GM10248 (cell line): ENCODE measurements at regions of chr3 and their contacts with region 1.

Region 1: DNA sequence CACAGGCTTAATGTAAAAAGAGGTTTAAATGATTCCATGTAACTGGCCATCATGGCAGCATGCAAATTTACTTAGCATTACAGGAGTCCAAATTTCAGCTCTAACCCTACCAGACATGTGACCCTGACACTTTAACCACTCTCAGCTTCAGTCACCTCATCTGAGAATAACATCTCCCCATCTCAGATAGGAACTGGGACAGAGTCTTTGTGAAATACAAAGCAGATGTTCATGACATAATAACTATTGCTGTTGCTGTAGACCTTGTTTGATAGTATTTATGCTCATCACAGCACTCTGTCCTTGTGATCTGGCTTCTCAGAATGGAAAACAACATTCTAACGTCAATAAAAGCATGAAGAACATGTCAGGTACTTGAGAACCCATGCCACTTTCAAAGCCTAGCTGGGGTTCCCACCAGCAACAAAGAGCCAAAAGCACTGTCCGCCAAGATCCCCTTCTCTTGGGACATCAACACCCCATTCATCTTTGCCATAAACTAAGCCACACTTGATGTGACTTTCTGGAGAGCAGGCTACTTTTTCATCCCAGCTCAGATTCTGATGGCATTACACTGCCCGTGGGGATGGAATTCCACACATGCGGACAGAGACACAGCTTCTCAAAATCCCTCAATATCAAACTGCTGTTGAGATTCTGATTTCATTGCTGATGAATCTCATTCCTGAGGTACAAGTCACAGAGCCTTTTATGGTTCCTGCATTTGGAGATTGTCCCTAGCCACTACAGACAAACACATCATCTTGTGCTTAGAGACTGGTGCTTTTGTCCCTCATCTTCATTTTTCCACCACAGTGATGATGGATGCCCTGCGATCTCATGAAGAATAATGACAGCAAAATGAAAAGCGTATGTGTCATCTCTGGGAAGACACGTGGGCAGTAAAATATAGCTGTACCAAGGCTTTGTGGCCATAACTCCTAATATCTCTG is 202.7 kb downstream of the TNIK start:
- DNase-seq: peak; percentile 33
- CTCF ChIP-seq: no peak

Region 2: DNA sequence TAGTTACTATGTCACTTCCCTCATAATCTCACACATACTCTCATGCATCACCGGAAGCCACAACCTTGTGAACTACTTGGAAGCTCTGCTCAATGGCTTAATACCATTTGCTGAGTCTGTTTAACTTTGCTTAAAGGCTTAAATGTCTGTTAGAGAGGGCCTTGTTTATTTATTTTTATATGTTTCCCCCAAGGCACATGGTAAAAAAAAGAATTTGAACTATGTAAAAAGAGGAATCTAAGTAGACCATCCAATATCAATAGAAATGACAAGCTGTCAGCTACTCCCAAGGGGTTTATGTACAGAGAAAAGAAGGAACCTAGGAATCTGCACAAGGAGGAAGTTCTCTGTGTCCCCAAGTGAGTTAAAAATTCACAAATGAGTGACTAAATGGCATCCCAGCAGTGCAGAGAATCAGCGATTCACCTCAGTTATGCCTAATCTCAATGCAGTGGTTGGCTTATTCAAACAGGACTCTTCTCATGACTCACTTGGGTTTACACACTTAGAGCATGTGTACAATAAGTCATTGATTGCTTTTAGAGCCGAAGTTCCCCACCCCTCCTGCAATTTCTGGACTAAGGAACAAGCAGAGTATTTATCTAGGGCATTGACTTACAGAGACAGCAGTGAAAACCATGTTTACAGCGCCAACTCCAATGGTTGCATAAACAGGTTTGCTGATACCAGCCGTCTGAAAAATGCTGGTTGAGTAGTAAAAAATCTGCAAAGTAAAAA is 255.4 kb before region 1 on chr3:
- CTCF ChIA-PET with region 1: no interaction called
- POLR2A ChIA-PET with region 1: no interaction called
- DNase-seq: no peak
- CTCF ChIP-seq: no peak

Region 3: GRCh38 chr3:171269542-171269941 is 12.0 kb after region 1 on chr3:
- CTCF ChIA-PET with region 1: interaction called, 34 read pairs
- POLR2A ChIA-PET with region 1: no interaction called
- DNase-seq: no peak
- CTCF ChIP-seq: no peak

Region 4: GRCh38 chr3:171284308-171285075 is 27.0 kb after region 1 on chr3:
- CTCF ChIA-PET with region 1: interaction called, 62 read pairs
- POLR2A ChIA-PET with region 1: interaction called, 3 read pairs
- DNase-seq: peak; percentile 18
- CTCF ChIP-seq: no peak